ENCODE measurements at regions of chr20 and their contacts with region 1.

Region 1: DNA sequence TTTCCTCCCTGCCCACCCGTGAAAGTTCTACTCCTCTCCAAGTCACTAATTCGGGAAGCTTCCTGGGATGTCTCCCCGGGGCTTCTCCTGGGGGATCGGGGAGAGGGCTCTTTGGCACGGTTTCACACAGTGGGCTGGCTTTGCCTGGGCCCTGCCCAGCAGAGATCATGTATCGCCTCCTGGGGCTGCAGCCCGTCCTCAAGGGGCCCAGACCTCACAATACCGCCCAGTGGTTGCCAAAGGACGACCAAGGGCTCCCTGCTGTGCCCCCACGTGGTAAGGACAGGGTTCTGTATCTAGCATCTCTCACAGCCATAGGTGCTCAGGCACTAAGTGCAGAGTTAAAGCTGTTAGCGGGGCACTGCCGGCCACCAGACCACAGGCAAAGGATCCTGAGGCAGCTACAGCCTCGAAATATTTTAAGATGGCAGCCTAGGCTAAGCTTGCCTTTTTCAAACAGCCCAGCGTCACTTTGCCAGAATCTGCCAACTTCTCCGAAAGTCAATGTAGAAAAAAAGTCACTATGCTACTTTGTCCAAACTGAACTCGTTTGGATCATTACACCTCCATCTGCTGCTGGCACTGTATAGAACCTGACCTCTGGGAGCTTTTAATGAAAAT is 1.4 kb upstream of the NNAT start:
- DNase-seq: no peak
- H3K4me3 ChIP-seq: no peak overlapping the region
- CTCF ChIP-seq: no peak

Region 2: GRCh38 chr20:36493013-36493800 is 1026.4 kb before region 1 on chr20:
- in situ Hi-C with region 1: no loop called
- DNase-seq: no peak
- H3K4me3 ChIP-seq: no peak overlapping the region
- CTCF ChIP-seq: peak; percentile 23

Region 3: DNA sequence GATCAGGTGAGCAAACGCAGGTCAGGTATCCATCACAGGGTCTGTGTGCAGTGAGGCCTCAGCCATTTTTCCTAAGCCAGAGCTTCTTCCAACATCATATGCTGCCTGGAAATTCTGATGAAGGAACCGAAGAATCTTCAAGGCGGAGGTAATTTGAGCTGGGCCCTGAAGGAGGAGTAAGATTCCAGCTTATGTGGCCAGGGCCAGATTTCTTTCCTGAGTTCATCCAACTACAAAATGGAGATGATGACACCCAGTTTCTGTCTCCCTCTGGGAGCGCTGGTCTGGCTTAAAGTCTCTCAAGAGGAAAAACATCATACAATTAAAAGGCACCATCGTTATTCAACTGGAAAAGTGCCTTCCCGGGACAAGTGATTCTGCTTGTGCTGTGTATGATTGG is 237.1 kb before region 1 on chr20:
- in situ Hi-C with region 1: loop called (anchors 10 kb)
- DNase-seq: peak; percentile 47
- H3K4me3 ChIP-seq: no peak overlapping the region
- CTCF ChIP-seq: peak; percentile 56

Region 4: GRCh38 chr20:37464611-37465010 is 55.0 kb before region 1 on chr20:
- in situ Hi-C with region 1: loop called (anchors 5 kb)
- DNase-seq: no peak
- H3K4me3 ChIP-seq: no peak overlapping the region
- CTCF ChIP-seq: no peak

Measured in astrocyte of the cerebellum (primary cell).